ENCODE measurements at regions of chr18 and their contacts with region 1.

Region 1: DNA sequence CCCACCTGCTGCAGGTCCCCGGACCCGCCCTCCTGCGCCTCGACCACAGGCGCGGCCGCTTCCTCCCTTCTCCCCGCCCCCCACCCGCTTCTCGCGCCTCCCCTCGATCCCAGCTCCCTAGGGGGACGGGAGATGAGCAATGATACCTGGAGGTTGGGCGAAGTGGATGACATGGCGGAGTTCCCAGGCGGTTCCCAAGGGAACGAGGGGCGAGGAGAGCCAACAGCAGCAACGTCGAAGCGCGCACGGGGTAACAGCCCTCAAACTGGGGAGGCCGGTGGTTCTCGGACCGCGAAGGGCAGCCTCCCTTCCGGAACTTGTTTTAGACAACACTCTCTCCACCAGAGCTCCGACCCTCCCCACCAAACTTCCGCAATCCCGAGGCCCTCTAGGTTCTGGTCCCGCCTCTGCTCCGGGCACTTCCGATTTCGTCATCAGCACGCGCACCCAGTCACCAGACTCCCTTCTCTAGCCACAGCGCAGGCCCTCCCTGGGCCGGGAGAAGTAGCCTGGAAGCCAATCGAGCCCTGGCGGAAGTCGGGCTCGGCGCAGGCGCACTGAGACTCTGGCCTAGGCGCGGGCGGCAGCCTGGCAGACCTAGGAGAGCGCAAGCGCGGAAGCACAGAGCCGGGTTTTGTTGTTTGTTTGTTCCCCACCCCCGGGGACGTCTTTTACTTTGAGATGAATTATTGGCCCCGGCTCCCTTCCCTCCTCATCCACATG is at the start of gene VPS4B:
- DNase-seq: peak; percentile 99
- ATAC-seq: peak; percentile 95
- H3K4me3 ChIP-seq: peak within 1 kb of the TSS; percentile 95
- H3K27ac ChIP-seq: peak within 1 kb of the TSS; percentile 81
- H3K4me1 ChIP-seq: peaks cover 18% of the 10 kb centered on the region
- H3K27me3 ChIP-seq: no peaks in the 10 kb centered on the region
- CTCF ChIP-seq: no peak
- total RNA-seq, gene VPS4B: 44.7 and 50.3 TPM in 2 replicates

Region 2: GRCh38 chr18:62710417-62710816 is 711.8 kb before region 1 on chr18:
- CTCF ChIA-PET with region 1: no interaction called
- POLR2A ChIA-PET with region 1: no interaction called
- intact Hi-C with region 1: no loop called
- DNase-seq: peak; percentile 43
- ATAC-seq: peak; percentile 5; the same call in 1 of the 2 replicates
- H3K4me3 ChIP-seq: no peak overlapping the region
- H3K27ac ChIP-seq: no peak overlapping the region
- H3K4me1 ChIP-seq: peaks cover 19% of the 10 kb centered on the region
- H3K27me3 ChIP-seq: no peaks in the 10 kb centered on the region
- CTCF ChIP-seq: no peak

Region 3: DNA sequence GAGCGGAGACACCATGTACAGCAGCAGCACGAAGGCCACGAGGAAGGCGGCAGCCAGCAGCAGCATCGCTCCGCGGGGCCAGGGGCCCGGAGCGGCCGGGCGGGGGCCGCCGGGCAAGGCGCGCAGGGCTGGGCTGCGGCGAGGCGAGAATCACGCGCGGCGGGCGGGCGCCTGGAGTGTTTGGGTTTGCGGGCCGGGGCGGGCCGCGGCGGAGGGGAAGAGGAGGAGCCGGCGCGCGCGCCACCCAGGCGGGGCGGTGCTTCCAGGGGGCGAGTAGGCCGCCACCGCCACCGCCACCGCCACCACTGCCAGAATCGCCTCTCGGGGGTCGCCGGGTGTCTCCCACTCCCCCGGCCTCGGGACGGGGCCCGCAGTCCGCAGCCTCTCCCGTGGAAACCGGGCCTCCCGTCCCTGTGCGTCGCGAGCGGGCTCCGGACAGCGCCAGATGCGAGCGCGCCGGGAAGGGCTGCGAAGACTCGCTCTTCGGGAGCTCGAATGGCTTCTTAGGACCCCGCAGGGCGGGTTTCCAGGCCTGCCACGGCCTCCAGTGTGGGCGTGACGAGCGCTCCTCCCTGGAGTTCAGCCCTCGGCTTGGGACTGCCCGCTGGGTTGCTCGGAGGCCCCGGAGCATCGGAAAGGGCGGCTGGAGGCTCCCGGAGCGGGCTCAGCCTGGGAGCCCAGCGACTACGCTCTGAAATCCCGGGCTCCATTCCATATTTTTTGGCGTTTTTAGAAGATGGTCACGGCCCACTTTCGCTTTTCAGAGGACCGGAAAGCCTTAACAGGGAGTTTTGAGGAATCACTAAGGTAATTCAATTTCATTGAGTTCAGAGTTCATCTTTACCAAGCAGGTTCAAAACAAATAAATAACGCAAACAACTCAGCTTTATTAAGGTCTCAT is 54.9 kb before region 1 on chr18 and contains the start of gene KDSR:
- CTCF ChIA-PET with region 1: no interaction called
- POLR2A ChIA-PET with region 1: interaction called, 3 read pairs
- intact Hi-C with region 1: loop called (anchors 5 kb)
- DNase-seq: peak; percentile 97
- ATAC-seq: peak; percentile 88
- H3K4me3 ChIP-seq: peak within 1 kb of the TSS; percentile 85
- H3K27ac ChIP-seq: peak within 1 kb of the TSS; percentile 68
- H3K4me1 ChIP-seq: peaks cover 6% of the 10 kb centered on the region
- H3K27me3 ChIP-seq: no peaks in the 10 kb centered on the region
- CTCF ChIP-seq: no peak
- total RNA-seq, gene KDSR: 15.8 and 16.1 TPM in 2 replicates

Region 4: DNA sequence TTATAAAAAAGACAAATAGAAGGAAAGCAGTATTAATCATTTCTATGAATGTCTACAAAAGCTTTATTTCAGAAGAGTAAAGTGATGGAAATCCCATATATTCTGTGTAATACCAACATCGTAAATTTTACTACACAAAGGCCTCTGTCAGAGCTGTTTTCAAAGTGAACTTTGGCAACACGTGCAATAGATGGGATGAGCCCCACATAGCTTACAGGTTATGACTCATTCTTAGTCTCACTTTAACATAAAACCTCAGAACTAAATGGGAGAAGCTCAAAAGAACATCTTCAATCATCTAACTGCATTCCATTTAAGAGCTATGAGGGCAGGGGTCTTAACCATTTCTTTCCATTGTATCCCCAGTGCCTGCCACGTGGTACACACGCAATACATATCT is 11.5 kb before region 1 on chr18:
- CTCF ChIA-PET with region 1: no interaction called
- POLR2A ChIA-PET with region 1: interaction called, 9 read pairs
- intact Hi-C with region 1: loop called (anchors 1 kb)
- DNase-seq: peak; percentile 83
- ATAC-seq: peak; percentile 85
- H3K4me3 ChIP-seq: 0 out of 2 replicates have a peak overlapping the region, but pooled peaks have one; percentile 6
- H3K27ac ChIP-seq: peak overlapping the region; percentile 84
- H3K4me1 ChIP-seq: peaks cover 49% of the 10 kb centered on the region
- H3K27me3 ChIP-seq: no peaks in the 10 kb centered on the region
- CTCF ChIP-seq: no peak

Region 5: GRCh38 chr18:63454497-63454896 is 32.2 kb after region 1 on chr18:
- CTCF ChIA-PET with region 1: no interaction called
- POLR2A ChIA-PET with region 1: interaction called, 21 read pairs
- intact Hi-C with region 1: no loop called
- DNase-seq: peak; percentile 96
- ATAC-seq: peak; percentile 91
- H3K4me3 ChIP-seq: peak overlapping the region; percentile 18; the same call in 1 of the 2 replicates
- H3K27ac ChIP-seq: peak overlapping the region; percentile 98
- H3K4me1 ChIP-seq: peaks cover 51% of the 10 kb centered on the region
- H3K27me3 ChIP-seq: no peaks in the 10 kb centered on the region
- CTCF ChIP-seq: no peak

Region 6: DNA sequence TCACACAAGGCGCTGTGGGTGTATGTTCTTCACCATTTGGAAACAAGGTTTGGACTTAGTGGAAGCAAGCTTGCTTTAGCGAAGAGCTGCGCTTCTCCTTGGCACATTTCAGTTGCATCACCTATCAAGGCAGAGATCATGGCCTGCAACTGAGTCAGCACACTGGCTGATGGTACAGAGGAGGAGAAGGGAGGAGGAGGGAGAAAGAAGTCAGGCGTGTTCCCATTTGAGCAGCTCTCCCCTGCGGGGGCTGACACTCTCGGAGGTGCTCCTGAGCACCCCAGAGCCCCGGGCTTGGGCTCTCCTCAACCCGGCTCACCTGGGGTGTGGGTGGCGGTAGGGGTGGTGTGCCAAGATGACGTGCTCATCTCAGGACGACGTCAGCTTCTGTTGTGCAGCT is 48.5 kb after region 1 on chr18:
- CTCF ChIA-PET with region 1: no interaction called
- POLR2A ChIA-PET with region 1: no interaction called
- intact Hi-C with region 1: no loop called
- DNase-seq: no peak
- ATAC-seq: no peak
- H3K4me3 ChIP-seq: no peak overlapping the region
- H3K27ac ChIP-seq: peak overlapping the region; percentile 100
- H3K4me1 ChIP-seq: peaks cover 31% of the 10 kb centered on the region
- H3K27me3 ChIP-seq: no peaks in the 10 kb centered on the region
- CTCF ChIP-seq: no peak

Measured in PC-3 (cell line).